ENCODE measurements at regions of chr3 and their contacts with region 1.

Region 1: DNA sequence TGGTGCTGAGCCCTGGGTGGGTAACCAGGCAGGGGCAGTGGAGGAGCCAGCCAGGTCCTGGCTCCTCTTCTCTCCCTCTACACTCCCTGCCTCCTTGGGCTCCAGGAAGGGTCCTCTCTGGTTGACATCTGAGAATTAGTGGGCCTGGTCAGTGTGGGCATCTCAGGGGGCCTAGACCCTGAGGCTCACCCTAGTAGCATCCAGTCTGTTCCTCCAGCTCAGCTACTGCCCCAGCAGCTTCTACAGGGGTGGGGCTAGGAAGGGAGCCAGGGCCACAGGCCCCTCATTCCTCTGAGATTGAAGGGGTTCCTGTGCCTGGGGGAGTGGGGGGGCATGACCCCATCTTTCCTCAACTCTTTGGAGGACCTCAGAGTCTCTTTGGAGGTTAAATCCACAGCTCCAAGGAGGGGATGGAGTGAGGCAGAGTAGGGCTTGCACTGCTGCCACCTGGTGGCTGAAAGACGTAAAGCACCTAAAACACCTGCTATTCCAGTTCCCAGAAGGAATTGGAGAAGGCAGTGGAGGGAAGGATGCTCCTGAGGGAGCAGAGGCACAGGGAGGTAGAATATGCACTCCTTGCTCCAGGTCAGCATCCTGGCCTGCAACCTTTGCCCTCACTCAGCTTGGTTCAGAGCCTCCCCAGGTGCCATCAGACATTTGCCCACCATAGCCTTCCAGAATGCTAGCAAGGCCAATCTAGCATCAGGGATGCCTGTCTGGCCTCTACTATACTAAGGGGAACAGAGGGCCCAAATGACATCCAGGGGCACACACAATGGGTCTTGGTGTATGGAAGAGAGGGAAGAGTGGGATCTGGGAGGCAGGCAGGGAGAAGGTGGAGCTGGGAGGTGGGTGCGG is 25.1 kb downstream of the C3orf18 start:
- DNase-seq: peak; percentile 64
- H3K4me3 Mint-ChIP-seq: no peak overlapping the region
- H3K27ac Mint-ChIP-seq: no peak overlapping the region
- H3K4me1 Mint-ChIP-seq: no peaks in the 10 kb centered on the region
- H3K27me3 Mint-ChIP-seq: peaks cover 16% of the 10 kb centered on the region

Region 2: DNA sequence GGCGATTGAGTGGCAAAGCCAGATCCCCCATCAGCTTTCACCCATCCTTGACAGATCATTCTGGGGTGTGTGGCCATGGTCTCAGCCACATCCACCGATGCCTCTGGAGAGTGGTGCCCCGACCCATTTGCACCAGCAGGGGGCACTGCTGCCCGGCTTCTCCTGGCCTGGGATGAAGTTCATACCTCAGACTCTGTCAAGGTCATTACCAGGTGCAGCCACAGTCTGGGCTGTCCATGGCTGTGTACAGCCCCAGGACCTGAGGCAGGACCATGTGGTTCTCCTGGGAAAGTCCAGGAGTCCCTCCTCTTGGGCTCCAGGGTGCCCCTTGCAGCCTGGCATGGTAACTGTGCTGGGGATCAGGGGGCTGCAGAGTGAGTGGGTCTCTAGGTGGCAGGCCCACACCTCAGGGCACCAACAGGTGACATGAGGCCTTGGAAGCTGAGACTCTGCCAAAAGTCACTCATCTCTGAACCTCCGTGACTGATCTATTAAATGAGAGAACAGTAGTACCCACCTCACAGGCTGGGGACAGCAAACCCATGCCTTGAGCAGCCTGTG is 106.2 kb before region 1 on chr3:
- CTCF ChIA-PET with region 1: interaction called, 20 read pairs
- POLR2A ChIA-PET with region 1: no interaction called
- DNase-seq: peak; percentile 83
- H3K4me3 Mint-ChIP-seq: no peak overlapping the region
- H3K27ac Mint-ChIP-seq: no peak overlapping the region
- H3K4me1 Mint-ChIP-seq: peaks cover 6% of the 10 kb centered on the region
- H3K27me3 Mint-ChIP-seq: no peaks in the 10 kb centered on the region

Region 3: GRCh38 chr3:50665641-50666040 is 123.2 kb after region 1 on chr3:
- CTCF ChIA-PET with region 1: no interaction called
- POLR2A ChIA-PET with region 1: no interaction called
- DNase-seq: no peak
- H3K4me3 Mint-ChIP-seq: no peak overlapping the region
- H3K27ac Mint-ChIP-seq: peak overlapping the region; percentile 44
- H3K4me1 Mint-ChIP-seq: peaks cover 10% of the 10 kb centered on the region
- H3K27me3 Mint-ChIP-seq: peaks cover 15% of the 10 kb centered on the region